BJ (cell line): ENCODE measurements at regions of chr5 and their contacts with region 1.

Region 1: DNA sequence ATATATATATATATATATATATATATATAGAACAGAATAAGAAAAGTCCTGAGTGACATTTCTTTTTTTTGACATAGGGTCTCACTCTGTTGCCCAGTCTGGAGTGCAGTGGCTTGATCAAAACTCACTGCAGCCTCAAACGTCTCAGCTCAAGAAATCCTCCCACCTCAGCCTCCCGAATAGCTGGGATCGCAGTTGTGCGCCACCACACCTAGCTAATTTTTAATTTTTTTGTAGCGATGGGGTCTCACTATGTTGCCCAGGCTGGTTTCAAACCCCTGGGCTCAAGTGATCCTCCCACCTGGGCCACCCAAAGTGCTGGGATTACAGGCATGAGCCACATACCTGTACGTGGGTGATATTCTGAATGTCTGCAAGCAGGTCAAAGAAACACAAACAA is 48.3 kb downstream of the SPRY4 start:
- DNase-seq: no peak
- H3K4me3 ChIP-seq: no peak overlapping the region
- H3K27me3 ChIP-seq: no peaks in the 10 kb centered on the region
- CTCF ChIP-seq: no peak

Region 2: GRCh38 chr5:142053426-142054151 is 222.9 kb before region 1 on chr5:
- CTCF ChIA-PET with region 1: no interaction called
- POLR2A ChIA-PET with region 1: no interaction called
- DNase-seq: peak; percentile 47
- H3K4me3 ChIP-seq: no peak overlapping the region
- H3K27me3 ChIP-seq: no peaks in the 10 kb centered on the region
- CTCF ChIP-seq: no peak

Region 3: GRCh38 chr5:142235055-142235797 is 41.3 kb before region 1 on chr5:
- CTCF ChIA-PET with region 1: no interaction called
- POLR2A ChIA-PET with region 1: no interaction called
- DNase-seq: no peak
- H3K4me3 ChIP-seq: no peak overlapping the region
- H3K27me3 ChIP-seq: 0 out of 2 replicates have a peak, but pooled peaks cover 2% of the 10 kb centered on the region
- CTCF ChIP-seq: no peak

Region 4: GRCh38 chr5:142364251-142365145 is 88.0 kb after region 1 on chr5:
- CTCF ChIA-PET with region 1: no interaction called
- POLR2A ChIA-PET with region 1: no interaction called
- DNase-seq: no peak
- H3K4me3 ChIP-seq: no peak overlapping the region
- H3K27me3 ChIP-seq: no peaks in the 10 kb centered on the region
- CTCF ChIP-seq: no peak

Region 5: GRCh38 chr5:142441616-142442015 is 165.1 kb after region 1 on chr5:
- CTCF ChIA-PET with region 1: no interaction called
- POLR2A ChIA-PET with region 1: interaction called, 14 read pairs
- DNase-seq: no peak
- H3K4me3 ChIP-seq: no peak overlapping the region
- H3K27me3 ChIP-seq: no peaks in the 10 kb centered on the region
- CTCF ChIP-seq: no peak